ENCODE measurements at regions of chr2 and their contacts with region 1.

Region 1: GRCh38 chr2:33681369-33681757 is 82.3 kb upstream of the FAM98A start:
- DNase-seq: peak; percentile 80
- H3K4me3 ChIP-seq: peak overlapping the region; percentile 13
- H3K27ac ChIP-seq: peak overlapping the region; percentile 73
- H3K4me1 ChIP-seq: peaks cover 12% of the 10 kb centered on the region
- H3K27me3 ChIP-seq: no peaks in the 10 kb centered on the region
- CTCF ChIP-seq: peak; percentile 73

Region 2: DNA sequence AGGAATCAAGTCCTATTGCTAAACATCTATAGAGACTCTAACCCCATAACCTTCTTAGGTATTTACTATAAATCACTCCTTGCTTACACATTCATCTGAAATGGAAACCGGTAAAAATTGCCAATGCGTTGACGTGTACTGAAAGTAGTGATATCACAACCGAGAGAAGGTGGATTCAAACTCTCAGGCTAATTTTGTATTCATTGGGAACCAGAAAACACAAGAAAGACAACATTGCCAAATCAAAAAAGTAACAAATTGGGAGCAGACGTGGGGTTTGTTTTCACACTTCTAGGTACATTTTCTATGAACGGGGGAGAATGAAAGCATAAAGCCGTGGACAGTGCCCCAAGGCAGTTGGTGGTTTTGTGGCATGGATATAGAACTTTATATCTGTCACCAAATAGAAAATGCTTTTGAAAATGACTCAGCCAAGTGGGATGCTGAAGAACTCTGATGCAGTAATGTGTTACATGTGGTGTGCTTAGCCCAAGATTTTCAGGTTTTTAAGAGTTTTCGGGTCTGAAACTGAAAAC is 360.1 kb before region 1 on chr2:
- CTCF ChIA-PET with region 1: no interaction called
- POLR2A ChIA-PET with region 1: no interaction called
- intact Hi-C with region 1: no loop called
- DNase-seq: no peak
- H3K4me3 ChIP-seq: no peak overlapping the region
- H3K27ac ChIP-seq: no peak overlapping the region
- H3K4me1 ChIP-seq: peaks cover 10% of the 10 kb centered on the region
- H3K27me3 ChIP-seq: no peaks in the 10 kb centered on the region
- CTCF ChIP-seq: no peak

Region 3: DNA sequence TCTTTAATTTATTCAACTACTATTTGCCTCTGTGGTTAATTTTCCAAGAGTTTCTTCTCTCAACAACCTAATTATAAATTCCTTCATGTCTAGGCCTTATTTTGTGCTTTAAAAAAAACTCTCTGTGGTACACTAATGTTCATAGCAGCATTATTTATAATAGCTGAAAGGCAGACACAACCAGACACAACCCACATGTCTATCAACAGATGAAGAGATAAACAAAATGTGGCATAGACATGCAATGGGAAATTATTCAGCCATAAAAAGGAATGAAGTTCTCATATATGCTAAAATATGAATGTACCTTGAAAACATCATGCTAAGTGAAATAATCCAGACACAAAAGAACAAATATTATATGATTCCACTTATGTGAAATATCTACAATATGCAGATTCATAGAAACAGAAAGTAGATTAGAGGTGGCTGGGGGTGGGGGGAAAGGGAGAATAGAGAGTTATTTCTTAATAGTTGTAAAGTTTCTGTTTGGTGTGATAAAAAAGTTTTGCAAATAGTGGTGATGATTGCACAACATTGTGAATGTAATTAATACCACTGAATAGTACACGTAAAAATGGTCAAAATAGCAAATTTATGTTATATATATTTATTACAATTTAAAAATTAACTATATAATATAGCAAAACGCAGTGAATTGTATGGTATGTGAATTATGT is 233.0 kb before region 1 on chr2:
- CTCF ChIA-PET with region 1: no interaction called
- POLR2A ChIA-PET with region 1: no interaction called
- intact Hi-C with region 1: no loop called
- DNase-seq: no peak
- H3K4me3 ChIP-seq: no peak overlapping the region
- H3K27ac ChIP-seq: no peak overlapping the region
- H3K4me1 ChIP-seq: no peaks in the 10 kb centered on the region
- H3K27me3 ChIP-seq: no peaks in the 10 kb centered on the region
- CTCF ChIP-seq: no peak

Region 4: DNA sequence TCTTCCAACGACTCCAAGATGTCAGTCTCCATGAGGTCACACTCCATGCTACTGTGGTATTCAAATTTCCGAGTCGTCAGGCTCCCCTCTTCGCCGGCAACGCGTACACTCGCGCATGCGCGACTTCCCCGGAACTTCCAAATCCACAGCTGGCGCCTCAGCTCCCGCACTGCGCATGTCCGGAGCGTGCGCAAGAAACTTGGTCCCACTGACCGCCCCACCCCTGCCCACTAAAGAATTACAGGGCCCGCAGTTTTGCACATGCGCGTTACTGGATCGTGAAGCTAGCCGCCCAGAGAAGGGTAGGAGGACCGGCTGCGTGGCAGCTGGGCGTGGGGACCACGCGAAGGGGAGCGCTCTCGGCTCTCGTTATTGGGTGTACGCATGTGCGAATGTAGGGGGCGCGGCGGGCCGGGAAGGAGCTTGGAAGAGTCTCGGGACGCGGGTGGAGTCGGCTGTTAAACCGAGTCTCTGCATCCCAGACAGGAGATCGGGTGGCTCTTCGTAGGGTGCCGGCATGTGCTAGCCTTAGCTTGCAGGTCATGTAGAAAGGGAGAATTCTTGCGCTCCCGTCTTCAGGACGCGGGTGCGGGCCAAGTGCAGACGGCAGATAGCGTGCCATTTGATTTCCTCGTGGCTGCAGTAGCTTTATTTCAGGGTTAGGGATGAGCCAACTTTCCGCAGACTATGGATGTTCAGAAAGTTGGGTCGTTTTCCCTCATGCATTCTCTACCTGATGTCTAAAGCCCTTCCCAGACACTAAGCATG is 82.0 kb before region 1 on chr2 and contains the start of gene FAM98A:
- CTCF ChIA-PET with region 1: no interaction called
- POLR2A ChIA-PET with region 1: no interaction called
- intact Hi-C with region 1: no loop called
- DNase-seq: peak; percentile 99
- H3K4me3 ChIP-seq: peak within 1 kb of the TSS; percentile 83
- H3K27ac ChIP-seq: peak within 1 kb of the TSS; percentile 65
- H3K4me1 ChIP-seq: peaks cover 4% of the 10 kb centered on the region
- H3K27me3 ChIP-seq: no peaks in the 10 kb centered on the region
- CTCF ChIP-seq: 0 out of 2 replicates have a peak, but pooled peaks have one; percentile 9
- total RNA-seq, gene FAM98A: 60.3 and 64.7 TPM in 2 replicates

Region 5: DNA sequence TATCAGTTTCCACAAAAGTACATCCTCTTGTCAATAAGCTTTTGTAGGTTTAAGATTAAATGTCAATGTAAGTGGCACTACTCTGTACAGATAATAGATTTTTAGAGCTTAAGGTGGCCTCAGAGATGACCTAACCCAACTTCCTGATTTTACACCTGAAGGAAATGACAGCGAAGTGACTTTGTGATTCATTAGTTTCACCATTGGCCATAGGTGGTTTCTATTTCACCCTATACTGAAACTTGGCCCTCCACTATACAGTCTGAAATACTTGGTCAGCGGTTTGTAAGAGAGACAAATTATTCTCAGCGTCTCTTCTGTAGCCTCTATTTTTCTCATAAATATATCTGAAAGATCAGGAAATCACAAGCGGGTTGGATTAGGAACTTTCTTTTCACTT is 248.1 kb after region 1 on chr2:
- CTCF ChIA-PET with region 1: no interaction called
- POLR2A ChIA-PET with region 1: no interaction called
- intact Hi-C with region 1: loop called (anchors 2 kb)
- DNase-seq: no peak
- H3K4me3 ChIP-seq: no peak overlapping the region
- H3K27ac ChIP-seq: peak overlapping the region; percentile 73
- H3K4me1 ChIP-seq: peaks cover 33% of the 10 kb centered on the region
- H3K27me3 ChIP-seq: no peaks in the 10 kb centered on the region
- CTCF ChIP-seq: no peak

Region 6: GRCh38 chr2:34012715-34013302 is 331.4 kb after region 1 on chr2:
- CTCF ChIA-PET with region 1: interaction called, 5 read pairs
- POLR2A ChIA-PET with region 1: no interaction called
- intact Hi-C with region 1: loop called (anchors 5 kb)
- DNase-seq: peak; percentile 85
- H3K4me3 ChIP-seq: no peak overlapping the region
- H3K27ac ChIP-seq: no peak overlapping the region
- H3K4me1 ChIP-seq: peaks cover 4% of the 10 kb centered on the region
- H3K27me3 ChIP-seq: no peaks in the 10 kb centered on the region
- CTCF ChIP-seq: peak; percentile 91

Region 7: GRCh38 chr2:34570266-34570872 is 889.0 kb after region 1 on chr2:
- CTCF ChIA-PET with region 1: interaction called, 6 read pairs
- POLR2A ChIA-PET with region 1: interaction called, 3 read pairs
- intact Hi-C with region 1: loop called (anchors 2 kb)
- DNase-seq: peak; percentile 63
- H3K4me3 ChIP-seq: no peak overlapping the region
- H3K27ac ChIP-seq: no peak overlapping the region
- H3K4me1 ChIP-seq: no peaks in the 10 kb centered on the region
- H3K27me3 ChIP-seq: no peaks in the 10 kb centered on the region
- CTCF ChIP-seq: peak; percentile 63

Region 8: DNA sequence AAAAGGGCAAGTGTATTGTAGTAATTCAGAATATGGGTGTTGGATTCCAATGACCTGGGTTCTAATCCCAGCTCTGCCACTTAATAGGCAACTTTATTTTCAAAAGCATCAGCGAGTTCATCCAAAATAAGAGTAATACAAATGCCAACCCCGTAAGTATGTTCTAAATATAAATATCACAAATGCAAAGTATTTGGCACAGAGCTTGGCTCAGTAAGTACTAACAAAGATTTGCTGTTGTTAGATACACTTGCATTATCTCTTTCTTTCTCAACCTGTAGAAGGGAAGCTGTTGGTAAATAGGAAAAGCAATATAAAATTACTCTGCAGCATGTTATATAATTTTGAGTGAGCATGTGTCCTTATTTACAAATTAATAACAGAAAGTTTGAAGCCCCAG is 1220.4 kb after region 1 on chr2:
- CTCF ChIA-PET with region 1: no interaction called
- POLR2A ChIA-PET with region 1: no interaction called
- intact Hi-C with region 1: loop called (anchors 5 kb)
- DNase-seq: no peak
- H3K4me3 ChIP-seq: no peak overlapping the region
- H3K27ac ChIP-seq: peak overlapping the region; percentile 33
- H3K4me1 ChIP-seq: no peaks in the 10 kb centered on the region
- H3K27me3 ChIP-seq: no peaks in the 10 kb centered on the region
- CTCF ChIP-seq: no peak

Region 9: GRCh38 chr2:35410431-35411061 is 1729.2 kb after region 1 on chr2:
- CTCF ChIA-PET with region 1: no interaction called
- POLR2A ChIA-PET with region 1: no interaction called
- intact Hi-C with region 1: loop called (anchors 5 kb)
- DNase-seq: peak; percentile 72
- H3K4me3 ChIP-seq: no peak overlapping the region
- H3K27ac ChIP-seq: no peak overlapping the region
- H3K4me1 ChIP-seq: no peaks in the 10 kb centered on the region
- H3K27me3 ChIP-seq: no peaks in the 10 kb centered on the region
- CTCF ChIP-seq: peak; percentile 98

Measured in A673 (cell line).